ENCODE measurements at regions of chr12 and their contacts with region 1.

Region 1: DNA sequence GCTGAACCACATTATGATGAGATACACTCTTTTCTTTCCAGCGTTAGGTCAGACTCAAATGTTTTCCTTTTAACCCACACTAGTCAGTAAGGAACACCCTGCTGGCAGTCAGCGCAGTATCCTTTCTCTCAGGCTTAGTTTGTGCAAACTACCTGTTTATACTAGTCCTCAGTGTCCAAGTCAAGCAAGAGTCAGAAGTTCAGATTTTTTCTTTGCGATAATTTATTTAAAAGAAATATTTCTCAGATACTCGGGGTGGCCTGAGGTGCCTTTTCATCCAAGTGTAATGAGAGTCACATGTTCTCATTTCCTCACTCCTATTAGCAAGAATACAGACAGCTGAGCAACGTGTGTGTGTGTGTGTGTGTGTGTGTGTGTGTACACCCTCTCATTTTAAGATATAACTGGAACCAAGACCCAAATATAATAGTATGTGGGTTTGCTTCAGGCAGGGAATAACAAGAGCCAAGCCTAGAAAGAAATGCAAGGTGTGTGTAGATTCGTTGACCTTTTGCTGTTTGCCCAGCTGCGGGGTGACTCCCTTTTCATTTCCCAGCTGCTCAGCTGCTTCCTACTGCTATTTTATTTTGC is 182.7 kb downstream of the KICS2 start:
- DNase-seq: peak; percentile 91
- H3K4me3 ChIP-seq: peak overlapping the region in 3 of 4 donors; percentile 24 to 31 (median 27)
- H3K27ac ChIP-seq: peak overlapping the region; percentile 40 to 65 (median 61)
- H3K4me1 ChIP-seq: peaks cover 3 to 31% (median 27%) of the 10 kb centered on the region in 4 donors
- H3K27me3 ChIP-seq: no peaks in the 10 kb centered on the region
- CTCF ChIP-seq: no peak
- EP300 ChIP-seq: no peak
- POLR2A ChIP-seq: no peak

Region 2: DNA sequence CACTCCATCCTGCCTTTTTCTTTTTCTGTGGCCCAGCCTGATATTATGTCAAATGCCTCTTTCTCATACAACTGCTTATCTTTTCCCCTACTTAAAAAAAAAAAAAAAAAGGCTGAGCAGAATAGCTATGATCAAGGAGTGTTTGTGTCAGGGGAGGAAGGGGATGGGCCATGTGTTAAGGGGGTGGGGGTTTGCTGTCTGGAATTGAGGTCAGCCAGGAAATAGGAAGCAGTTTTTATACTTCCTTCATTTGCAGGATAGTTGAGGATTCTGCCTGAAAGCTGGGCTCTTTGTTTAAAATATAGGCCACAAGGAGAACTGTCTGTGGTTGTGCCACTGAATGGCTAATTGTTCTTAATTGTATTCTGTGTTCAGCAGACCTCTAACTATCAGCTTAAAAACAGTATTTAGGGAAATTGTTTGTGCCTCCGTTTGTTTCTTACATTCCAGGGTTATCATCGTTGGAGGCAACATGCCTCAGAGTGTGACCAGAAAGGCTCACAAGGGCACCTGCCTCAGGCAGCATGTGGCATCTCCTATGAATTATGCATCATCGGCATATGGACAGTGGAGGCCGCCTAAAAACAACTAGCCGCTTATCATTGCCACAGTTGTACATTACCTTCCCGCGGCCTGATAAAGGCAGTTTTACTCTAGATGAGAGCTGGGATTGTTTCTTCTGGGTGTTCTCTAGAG is 98.9 kb before region 1 on chr12:
- intact Hi-C with region 1: no loop called
- DNase-seq: no peak
- H3K4me3 ChIP-seq: no peak overlapping the region
- H3K27ac ChIP-seq: no peak overlapping the region
- H3K4me1 ChIP-seq: peaks cover 9 to 23% (median 17%) of the 10 kb centered on the region in 4 donors
- H3K27me3 ChIP-seq: no peaks in the 10 kb centered on the region
- CTCF ChIP-seq: no peak
- EP300 ChIP-seq: no peak
- POLR2A ChIP-seq: no peak

Region 3: DNA sequence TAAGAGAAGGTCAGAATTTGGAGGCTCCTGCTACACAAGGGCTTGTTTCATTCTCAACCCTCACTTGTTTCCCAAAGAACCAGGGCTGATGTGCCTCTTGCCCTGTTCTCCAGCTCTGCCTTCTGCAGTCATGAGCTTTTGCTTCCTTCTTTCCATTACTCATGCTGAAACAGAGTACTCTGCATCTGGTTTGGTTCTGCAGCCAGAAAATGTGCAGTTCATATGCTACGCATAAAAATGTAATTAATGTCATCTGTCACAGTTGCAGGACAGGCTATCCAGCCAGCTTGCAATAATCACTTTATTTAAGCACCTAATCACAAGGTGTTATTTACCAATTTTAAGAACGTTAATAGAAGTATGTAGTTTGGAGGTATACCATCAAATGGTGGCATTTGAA is 44.7 kb before region 1 on chr12:
- intact Hi-C with region 1: no loop called
- DNase-seq: no peak
- H3K4me3 ChIP-seq: no peak overlapping the region
- H3K27ac ChIP-seq: no peak overlapping the region
- H3K4me1 ChIP-seq: peaks cover 8 to 50% (median 46%) of the 10 kb centered on the region in 4 donors
- H3K27me3 ChIP-seq: no peaks in the 10 kb centered on the region
- CTCF ChIP-seq: no peak
- EP300 ChIP-seq: no peak
- POLR2A ChIP-seq: no peak

Region 4: GRCh38 chr12:64083285-64084210 is 44.2 kb after region 1 on chr12:
- intact Hi-C with region 1: loop called (anchors 5 kb)
- DNase-seq: no peak
- H3K4me3 ChIP-seq: no peak overlapping the region
- H3K27ac ChIP-seq: peak overlapping the region; percentile 58 to 79 (median 73)
- H3K4me1 ChIP-seq: peaks cover 25 to 65% (median 53%) of the 10 kb centered on the region in 4 donors
- H3K27me3 ChIP-seq: no peaks in the 10 kb centered on the region
- CTCF ChIP-seq: no peak
- EP300 ChIP-seq: no peak
- POLR2A ChIP-seq: no peak

Measured in esophagus muscularis mucosa (tissue), 4 donors.